ENCODE measurements at regions of chr2 and their contacts with region 1.

Region 1: GRCh38 chr2:85420536-85421259 is 2.2 kb downstream of the SH2D6 start:
- DNase-seq: peak; percentile 87 to 97 (median 91)
- ATAC-seq: peak; percentile 87
- H3K4me3 ChIP-seq: peak overlapping the region in 1 of 2 donors; percentile 0
- H3K27ac ChIP-seq: peak overlapping the region; percentile 86 to 87
- H3K4me1 ChIP-seq: peaks cover 21 to 46% of the 10 kb centered on the region in 2 donors
- H3K27me3 ChIP-seq: no peaks in the 10 kb centered on the region
- CTCF ChIP-seq: peak; percentile 100

Region 2: GRCh38 chr2:85551698-85552678 is 131.3 kb after region 1 on chr2:
- intact Hi-C with region 1: loop called (anchors 2 to 10 kb)
- DNase-seq: peak; percentile 63 to 85 (median 82)
- ATAC-seq: peak; percentile 90
- H3K4me3 ChIP-seq: no peak overlapping the region
- H3K27ac ChIP-seq: peak overlapping the region in 1 of 2 donors; percentile 76
- H3K4me1 ChIP-seq: peaks cover 2 to 27% of the 10 kb centered on the region in 2 donors
- H3K27me3 ChIP-seq: no peaks in the 10 kb centered on the region
- CTCF ChIP-seq: peak; percentile 89 to 98